ENCODE measurements at regions of chr17 and their contacts with region 1.

Region 1: GRCh38 chr17:74368092-74369081 is 1.1 kb downstream of the GPR142 start:
- DNase-seq: peak; percentile 64
- ATAC-seq: peak; percentile 77
- H3K4me3 Mint-ChIP-seq: no peak overlapping the region
- H3K27ac Mint-ChIP-seq: no peak overlapping the region
- H3K4me1 Mint-ChIP-seq: peaks cover 14% of the 10 kb centered on the region
- H3K27me3 Mint-ChIP-seq: peaks cover 17% of the 10 kb centered on the region
- CTCF ChIP-seq: peak; percentile 58

Region 2: GRCh38 chr17:74379495-74380085 is 11.2 kb after region 1 on chr17:
- CTCF ChIA-PET with region 1: interaction called, 39 read pairs
- POLR2A ChIA-PET with region 1: interaction called, 3 read pairs
- intact Hi-C with region 1: no loop called
- DNase-seq: peak; percentile 80
- ATAC-seq: peak; percentile 90
- H3K4me3 Mint-ChIP-seq: no peak overlapping the region
- H3K27ac Mint-ChIP-seq: no peak overlapping the region
- H3K4me1 Mint-ChIP-seq: peaks cover 2% of the 10 kb centered on the region
- H3K27me3 Mint-ChIP-seq: peaks cover 26% of the 10 kb centered on the region
- CTCF ChIP-seq: no peak

Region 3: DNA sequence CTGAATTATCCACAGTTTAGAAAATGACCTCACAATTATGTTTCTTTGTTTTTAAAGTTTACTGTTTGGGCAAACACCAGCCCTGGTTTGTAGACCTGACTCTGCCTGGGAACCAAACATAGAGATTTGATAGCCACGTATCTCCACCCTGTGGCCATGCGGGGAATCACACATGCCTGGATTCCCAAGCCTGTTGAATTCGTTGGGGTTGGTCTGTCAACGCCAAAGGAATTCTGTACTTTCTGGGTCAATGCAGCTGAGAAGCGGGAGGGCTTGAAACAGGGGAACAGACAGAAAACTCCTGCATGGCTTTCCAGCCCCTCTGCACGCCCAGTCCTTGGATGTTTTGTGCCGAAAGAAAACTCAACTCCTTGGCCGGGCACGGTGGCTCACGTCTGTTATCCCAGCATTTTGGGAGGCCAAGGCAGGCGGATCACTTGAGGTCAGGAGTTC is 125.0 kb after region 1 on chr17:
- CTCF ChIA-PET with region 1: interaction called, 6 read pairs
- POLR2A ChIA-PET with region 1: no interaction called
- intact Hi-C with region 1: loop called (anchors 1 kb)
- DNase-seq: peak; percentile 42
- ATAC-seq: peak; percentile 75
- H3K4me3 Mint-ChIP-seq: no peak overlapping the region
- H3K27ac Mint-ChIP-seq: no peak overlapping the region
- H3K4me1 Mint-ChIP-seq: no peaks in the 10 kb centered on the region
- H3K27me3 Mint-ChIP-seq: peaks cover 3% of the 10 kb centered on the region
- CTCF ChIP-seq: peak; percentile 62

Region 4: GRCh38 chr17:74601944-74602572 is 233.7 kb after region 1 on chr17:
- CTCF ChIA-PET with region 1: interaction called, 4 read pairs
- POLR2A ChIA-PET with region 1: no interaction called
- intact Hi-C with region 1: loop called (anchors 1 kb)
- DNase-seq: no peak
- ATAC-seq: no peak
- H3K4me3 Mint-ChIP-seq: no peak overlapping the region
- H3K27ac Mint-ChIP-seq: no peak overlapping the region
- H3K4me1 Mint-ChIP-seq: peaks cover 53% of the 10 kb centered on the region
- H3K27me3 Mint-ChIP-seq: peaks cover 6% of the 10 kb centered on the region
- CTCF ChIP-seq: no peak

Region 5: DNA sequence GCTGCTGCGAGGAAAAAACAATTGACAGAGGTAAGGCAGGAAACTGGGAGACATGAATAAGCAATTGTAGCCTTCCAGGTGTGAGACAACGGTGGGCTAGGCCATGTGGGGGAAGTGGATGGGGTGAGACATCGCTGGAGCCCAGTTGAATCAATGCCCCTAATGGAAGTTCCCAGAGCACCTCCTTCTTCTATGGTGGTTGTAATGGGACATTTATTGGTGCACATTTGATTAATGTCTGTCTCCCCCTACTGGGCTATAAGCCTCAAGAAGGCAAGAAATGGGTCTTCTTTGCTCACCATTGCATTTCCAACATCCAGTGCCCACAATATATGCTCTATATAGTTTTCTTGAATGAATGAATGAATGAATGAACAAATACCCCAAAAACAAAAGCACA is 277.8 kb after region 1 on chr17:
- CTCF ChIA-PET with region 1: interaction called, 3 read pairs
- POLR2A ChIA-PET with region 1: no interaction called
- intact Hi-C with region 1: loop called (anchors 2 kb)
- DNase-seq: no peak
- ATAC-seq: peak; percentile 45
- H3K4me3 Mint-ChIP-seq: no peak overlapping the region
- H3K27ac Mint-ChIP-seq: peak overlapping the region; percentile 31
- H3K4me1 Mint-ChIP-seq: peaks cover 46% of the 10 kb centered on the region
- H3K27me3 Mint-ChIP-seq: peaks cover 34% of the 10 kb centered on the region
- CTCF ChIP-seq: no peak

Measured in activated B cell treated with CpG ODN at 0.5 μM for 24 hours (primary cell).